ENCODE measurements at regions of chr1 and their contacts with region 1.

Region 1: GRCh38 chr1:32773018-32773763 is 44.0 kb downstream of the YARS1 start:
- DNase-seq: peak; percentile 54 to 81 (median 61)
- H3K4me3 ChIP-seq: no peak overlapping the region
- H3K4me3 Mint-ChIP-seq: no peak overlapping the region
- H3K27ac ChIP-seq: no peak overlapping the region
- H3K27ac Mint-ChIP-seq: peak overlapping the region in 6 of 8 donors; percentile 21 to 67 (median 53)
- H3K4me1 ChIP-seq: peaks cover 4% of the 10 kb centered on the region
- H3K4me1 Mint-ChIP-seq: peaks cover 14 to 23% (median 17%) of the 10 kb centered on the region in 3 donors
- H3K27me3 ChIP-seq: no peaks in the 10 kb centered on the region
- H3K27me3 Mint-ChIP-seq: no peaks in the 10 kb centered on the region

Region 2: DNA sequence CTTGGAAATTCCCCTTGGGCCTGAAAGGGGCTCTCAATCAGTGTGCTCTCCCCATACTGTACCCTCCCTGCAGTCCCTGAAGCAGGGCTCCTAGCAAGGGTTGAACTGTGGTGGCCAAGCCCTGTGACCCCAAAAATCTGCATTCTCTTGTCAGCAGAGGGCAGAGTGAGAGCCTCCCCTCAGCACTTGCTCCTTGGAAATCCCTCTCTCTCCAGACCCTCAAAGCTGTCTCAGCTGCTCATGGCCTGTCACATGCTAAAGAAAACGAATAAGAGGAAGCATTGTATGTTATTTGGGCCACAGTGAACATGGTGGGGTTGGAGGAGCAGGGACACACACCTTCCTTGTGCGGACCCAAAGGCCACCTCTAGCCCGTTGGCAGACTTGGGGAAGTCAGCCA is 23.4 kb before region 1 on chr1:
- CTCF ChIA-PET with region 1: no interaction called
- POLR2A ChIA-PET with region 1: no interaction called
- DNase-seq: no peak
- H3K4me3 ChIP-seq: no peak overlapping the region
- H3K4me3 Mint-ChIP-seq: no peak overlapping the region
- H3K27ac ChIP-seq: no peak overlapping the region
- H3K27ac Mint-ChIP-seq: no peak overlapping the region
- H3K4me1 ChIP-seq: peaks cover 6% of the 10 kb centered on the region
- H3K4me1 Mint-ChIP-seq: peaks cover 10 to 14% (median 11%) of the 10 kb centered on the region in 3 donors
- H3K27me3 ChIP-seq: no peaks in the 10 kb centered on the region
- H3K27me3 Mint-ChIP-seq: peaks cover 5% of the 10 kb centered on the region in 2 donors

Region 3: DNA sequence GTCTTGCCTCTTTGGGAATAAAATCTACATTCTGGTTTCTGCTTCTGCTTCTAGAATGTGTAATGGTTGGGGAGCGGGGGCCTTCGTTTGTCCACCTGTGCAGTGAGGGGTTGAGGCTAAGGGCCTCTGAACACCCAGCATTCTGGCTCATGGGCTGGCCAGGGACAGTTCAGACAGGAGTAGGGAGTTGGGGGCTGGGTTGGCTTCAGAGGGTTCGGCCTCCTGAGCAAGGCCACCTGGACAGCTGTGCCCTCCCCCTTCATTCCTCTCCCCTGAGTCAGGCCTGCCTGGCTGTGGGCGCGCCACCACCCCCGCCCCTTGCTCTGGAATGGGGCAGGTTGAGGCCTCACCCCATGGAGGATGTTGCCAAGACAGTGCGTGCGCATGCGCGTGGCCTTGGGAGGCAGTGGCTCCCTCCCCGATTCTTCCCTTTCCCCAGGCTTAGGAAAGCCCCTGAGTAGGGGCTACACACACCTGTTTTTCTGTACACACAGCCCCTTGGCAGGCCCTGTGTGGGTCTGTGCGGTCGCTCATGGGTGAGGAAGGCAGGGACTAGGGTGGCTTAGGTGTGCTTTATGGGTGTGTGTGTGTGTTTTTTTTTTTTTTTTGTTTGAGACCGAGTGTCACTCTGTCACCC is 13.1 kb before region 1 on chr1:
- CTCF ChIA-PET with region 1: interaction called, 10 read pairs
- POLR2A ChIA-PET with region 1: no interaction called
- DNase-seq: no peak
- H3K4me3 ChIP-seq: no peak overlapping the region
- H3K4me3 Mint-ChIP-seq: no peak overlapping the region
- H3K27ac ChIP-seq: no peak overlapping the region
- H3K27ac Mint-ChIP-seq: peak overlapping the region in 5 of 8 donors; percentile 1 to 64 (median 27)
- H3K4me1 ChIP-seq: peaks cover 30% of the 10 kb centered on the region
- H3K4me1 Mint-ChIP-seq: peaks cover 7 to 30% (median 13%) of the 10 kb centered on the region in 3 donors
- H3K27me3 ChIP-seq: no peaks in the 10 kb centered on the region
- H3K27me3 Mint-ChIP-seq: no peaks in the 10 kb centered on the region

Measured in CD8-positive, alpha-beta memory T cell (primary cell).